Esophagus muscularis mucosa (tissue), 4 donors: ENCODE measurements at regions of chrX and their contacts with region 1.

Region 1: DNA sequence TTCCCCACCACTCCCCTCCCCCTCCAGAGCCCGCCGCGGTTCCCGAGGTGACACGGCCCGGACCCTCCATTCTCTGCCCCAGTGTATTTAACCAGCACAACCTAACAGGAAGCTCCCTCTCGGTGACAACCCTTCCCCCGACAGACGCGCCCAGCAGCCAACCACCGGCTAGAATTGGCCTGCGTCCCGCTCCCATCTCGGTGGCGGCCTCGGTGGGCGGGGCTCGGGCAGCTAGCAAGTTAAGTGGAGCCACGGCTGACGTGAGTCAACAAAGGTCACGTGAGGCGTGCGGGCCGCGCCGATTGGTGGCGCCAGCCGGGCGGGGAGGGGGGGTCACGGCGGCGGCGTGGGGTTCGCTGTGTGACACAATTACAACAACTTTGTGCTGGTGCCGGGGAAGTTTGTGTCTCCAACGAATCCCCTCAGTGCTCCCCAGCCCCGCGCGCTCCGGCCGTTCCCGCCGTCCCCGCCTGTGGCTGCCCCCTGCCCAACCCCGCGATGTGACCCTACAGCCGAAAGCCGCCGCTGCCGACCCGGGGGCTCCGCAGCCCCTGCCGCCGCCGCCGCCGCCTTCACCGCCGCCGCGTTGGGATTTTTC is at the start of gene KDM6A:
- DNase-seq: peak; percentile 98
- H3K4me3 ChIP-seq: peak within 1 kb of the TSS; percentile 83 to 98 (median 91)
- H3K27ac ChIP-seq: peak within 1 kb of the TSS; percentile 97 to 100 (median 99)
- H3K4me1 ChIP-seq: peaks cover 18 to 52% (median 31%) of the 10 kb centered on the region in 4 donors
- H3K27me3 ChIP-seq: no peaks in the 10 kb centered on the region
- CTCF ChIP-seq: no peak
- EP300 ChIP-seq: no peak
- POLR2A ChIP-seq: peak; percentile 65
- total RNA-seq, gene KDM6A: 14.4 to 24.1 (median 23.2) TPM

Region 2: DNA sequence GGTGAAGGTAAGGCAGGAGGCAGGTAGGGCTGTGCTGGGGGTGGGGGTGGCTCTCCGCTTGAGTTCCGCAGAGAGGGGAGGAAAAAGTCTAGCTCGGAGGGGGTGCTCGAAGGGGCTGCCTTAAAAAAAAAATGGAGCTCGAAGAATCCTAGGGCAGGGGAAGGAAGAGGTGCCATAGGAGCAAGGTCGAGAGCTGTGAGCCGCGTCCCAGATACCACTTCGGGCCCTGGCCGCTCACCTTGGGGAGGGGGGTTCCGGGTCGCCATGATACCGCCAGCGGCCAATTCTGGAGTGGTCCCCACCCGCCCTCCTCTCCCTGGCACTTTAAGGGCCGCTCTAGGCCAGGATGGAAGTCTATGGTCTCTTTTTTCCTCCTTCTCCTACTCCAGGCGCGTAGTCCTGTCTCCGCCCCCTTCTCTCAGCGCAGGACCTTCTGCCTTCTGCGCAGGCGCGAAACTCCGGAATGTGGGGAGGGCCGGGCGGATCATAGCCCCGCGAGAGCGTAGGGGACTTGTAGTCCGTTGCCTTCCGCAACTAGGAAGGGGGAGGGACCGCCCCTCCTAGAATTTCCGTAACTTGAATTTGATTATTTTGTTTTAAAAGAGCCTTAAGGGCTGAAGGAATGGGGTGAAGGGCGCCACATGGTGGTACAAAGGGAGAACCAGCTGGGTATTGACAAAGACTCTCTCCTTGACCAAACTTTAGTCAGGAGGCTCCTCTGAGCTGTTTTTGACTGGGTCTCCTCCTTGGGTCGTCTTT is 330.2 kb before region 1 on chrX and contains the start of gene FUNDC1:
- intact Hi-C with region 1: loop called (anchors 10 kb)
- DNase-seq: peak; percentile 95
- H3K4me3 ChIP-seq: peak within 1 kb of the TSS; percentile 68 to 82 (median 72)
- H3K27ac ChIP-seq: peak within 1 kb of the TSS; percentile 72 to 80 (median 78)
- H3K4me1 ChIP-seq: peaks cover 11 to 27% (median 24%) of the 10 kb centered on the region in 4 donors
- H3K27me3 ChIP-seq: no peaks in the 10 kb centered on the region
- CTCF ChIP-seq: peak; percentile 25 to 35 (median 34)
- EP300 ChIP-seq: no peak
- POLR2A ChIP-seq: no peak
- total RNA-seq, gene FUNDC1: 7.3 to 11.4 (median 9.4) TPM

Region 3: DNA sequence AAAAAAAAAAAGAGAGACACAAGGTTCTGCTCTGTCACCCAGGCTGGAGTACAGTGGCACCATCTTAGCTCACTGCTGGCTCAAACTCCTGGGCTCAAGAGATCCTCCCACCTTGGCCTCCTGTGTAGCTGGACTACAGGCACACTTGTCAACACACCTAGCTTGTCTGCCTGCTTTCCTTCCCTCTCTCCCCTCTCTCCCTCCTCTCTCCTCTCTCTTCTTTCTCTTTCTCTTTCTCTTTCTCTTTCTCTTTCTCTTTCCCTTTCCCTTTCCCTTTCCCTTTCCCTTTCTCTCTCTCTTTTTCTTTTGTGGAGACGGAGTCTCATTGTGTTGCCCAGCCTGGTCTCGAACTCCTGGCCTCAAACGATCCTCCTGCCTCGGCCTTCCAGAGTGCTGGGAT is 195.7 kb after region 1 on chrX:
- intact Hi-C with region 1: loop called (anchors 5 kb)
- DNase-seq: no peak
- H3K4me3 ChIP-seq: no peak overlapping the region
- H3K27ac ChIP-seq: no peak overlapping the region
- H3K4me1 ChIP-seq: peaks cover 0 to 45% (median 16%) of the 10 kb centered on the region in 4 donors
- H3K27me3 ChIP-seq: no peaks in the 10 kb centered on the region
- CTCF ChIP-seq: no peak
- EP300 ChIP-seq: no peak
- POLR2A ChIP-seq: no peak

Region 4: DNA sequence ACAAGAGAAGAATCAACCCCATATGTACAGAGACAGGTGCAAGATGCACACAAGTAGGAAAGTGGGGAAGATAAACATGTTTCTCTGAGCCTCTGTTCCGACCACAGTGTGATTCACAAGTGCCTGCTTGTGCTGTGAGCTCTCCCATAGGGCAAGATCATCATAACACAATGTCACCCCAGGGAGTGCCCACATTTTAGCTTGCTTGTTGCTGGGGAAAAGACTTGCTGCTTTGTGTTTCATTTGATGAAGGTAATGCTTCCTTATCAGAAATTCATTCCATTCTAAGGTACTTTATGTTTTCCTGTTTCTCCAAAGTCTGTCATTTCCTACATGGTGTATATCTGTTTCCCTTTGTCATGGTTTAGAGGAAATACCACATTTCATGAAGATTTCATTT is 632.3 kb after region 1 on chrX:
- intact Hi-C with region 1: loop called (anchors 10 kb)
- DNase-seq: no peak
- H3K4me3 ChIP-seq: no peak overlapping the region
- H3K27ac ChIP-seq: peak overlapping the region in 3 of 4 donors; percentile 72 to 77 (median 74)
- H3K4me1 ChIP-seq: peaks cover 23 to 37% (median 33%) of the 10 kb centered on the region in 4 donors
- H3K27me3 ChIP-seq: no peaks in the 10 kb centered on the region
- CTCF ChIP-seq: no peak
- EP300 ChIP-seq: no peak
- POLR2A ChIP-seq: no peak